ENCODE measurements at regions of chr3 and their contacts with region 1.

Region 1: GRCh38 chr3:64187065-64187959 is 38.0 kb downstream of the PRICKLE2 start:
- DNase-seq: no peak
- H3K4me3 ChIP-seq: no peak overlapping the region
- H3K27ac ChIP-seq: no peak overlapping the region
- H3K4me1 ChIP-seq: peaks cover 0 to 9% (median 1%) of the 10 kb centered on the region in 4 experiments; a peak in 2 of 7 replicates
- H3K27me3 ChIP-seq: no peaks in the 10 kb centered on the region; a peak in 1 of 7 replicates
- CTCF ChIP-seq: no peak
- EP300 ChIP-seq: no peak
- POLR2A ChIP-seq: no peak
- RAD21 ChIP-seq: no peak

Region 2: DNA sequence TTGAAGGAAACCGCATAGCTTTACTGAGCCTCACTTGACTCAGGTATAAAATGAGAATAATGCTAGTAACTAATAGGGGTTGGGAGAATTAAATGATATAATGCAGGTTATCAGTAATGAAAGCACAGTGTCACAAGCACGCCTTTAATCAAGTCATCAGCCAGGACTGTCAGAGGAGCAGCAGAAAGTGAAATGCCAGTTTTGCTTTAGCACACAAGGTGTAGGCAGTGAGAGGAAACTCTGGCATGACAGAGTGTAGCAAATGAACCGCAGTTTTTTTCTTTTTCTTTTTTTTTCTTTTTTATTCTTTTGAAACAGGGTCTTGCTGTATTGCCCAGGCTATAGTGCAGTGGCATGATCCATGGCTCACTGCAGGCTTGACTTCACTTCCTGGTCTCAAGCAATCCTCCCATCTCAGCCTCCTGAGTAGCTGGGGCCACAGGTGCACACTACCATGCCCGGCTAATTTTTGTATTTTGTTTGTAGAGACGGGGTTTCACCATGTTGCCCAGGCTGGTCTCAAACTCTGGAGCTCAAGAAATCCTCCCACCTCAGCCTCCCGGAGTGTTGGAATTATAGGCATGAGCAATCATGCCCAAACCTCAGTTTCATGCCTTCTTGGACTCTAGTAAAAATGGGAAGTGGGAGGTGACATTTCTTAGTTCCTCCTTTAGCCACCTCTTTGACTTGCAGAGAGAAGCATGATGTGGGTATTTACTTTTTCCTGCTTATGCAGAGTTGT is 265.4 kb before region 1 on chr3:
- CTCF ChIA-PET with region 1: no interaction called
- POLR2A ChIA-PET with region 1: no interaction called
- DNase-seq: no peak
- H3K4me3 ChIP-seq: no peak overlapping the region
- H3K27ac ChIP-seq: no peak overlapping the region
- H3K4me1 ChIP-seq: no peaks in the 10 kb centered on the region
- H3K27me3 ChIP-seq: no peaks in the 10 kb centered on the region
- CTCF ChIP-seq: no peak
- EP300 ChIP-seq: no peak
- POLR2A ChIP-seq: no peak
- RAD21 ChIP-seq: no peak

Region 3: DNA sequence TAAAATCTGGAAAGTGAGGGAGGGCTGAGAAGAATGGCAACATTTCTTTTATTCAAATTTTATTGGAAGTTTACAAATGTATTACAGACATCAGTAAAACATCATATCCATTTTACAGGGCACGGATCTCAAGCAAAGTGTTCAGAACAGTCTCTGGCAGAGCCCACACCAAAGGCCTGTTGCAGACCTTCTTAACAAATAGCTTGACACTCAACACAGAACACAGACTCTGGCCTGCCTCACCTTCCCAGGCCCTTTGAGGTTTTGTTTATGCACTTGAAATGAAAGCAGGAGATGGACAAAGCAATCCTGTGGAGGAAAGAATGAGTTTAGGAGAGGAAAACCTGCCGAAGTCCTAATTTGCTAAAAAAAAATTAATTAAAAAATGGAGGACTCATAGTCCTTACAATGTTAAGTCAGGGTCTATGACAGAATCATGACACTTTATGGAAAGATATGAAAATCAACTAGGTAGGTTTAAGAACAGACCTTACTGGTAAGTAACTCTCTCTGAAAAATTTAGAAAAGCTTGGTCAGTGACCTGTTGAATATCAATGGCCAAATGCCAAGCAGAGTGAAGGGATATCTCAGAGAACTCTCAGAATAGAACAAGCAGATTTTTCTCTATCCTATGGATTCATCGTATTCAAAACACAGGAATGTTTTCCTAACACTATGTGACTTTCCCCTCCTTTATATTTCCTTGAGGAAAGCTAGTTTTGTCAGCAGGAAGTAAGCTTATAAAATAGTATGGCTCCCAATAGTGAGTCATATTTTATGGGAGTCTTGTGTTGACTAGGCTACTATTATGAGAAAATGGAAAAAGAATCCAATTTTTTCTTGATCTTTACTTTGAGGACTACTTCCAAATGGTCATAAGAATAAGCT is 93.2 kb before region 1 on chr3:
- CTCF ChIA-PET with region 1: no interaction called
- POLR2A ChIA-PET with region 1: no interaction called
- DNase-seq: no peak
- H3K4me3 ChIP-seq: peak overlapping the region in 1 of 4 experiments; percentile 27; a peak in 1 of 8 replicates
- H3K27ac ChIP-seq: no peak overlapping the region
- H3K4me1 ChIP-seq: peaks cover 4 to 21% (median 14%) of the 10 kb centered on the region in 4 experiments
- H3K27me3 ChIP-seq: no peaks in the 10 kb centered on the region
- CTCF ChIP-seq: no peak
- EP300 ChIP-seq: no peak
- POLR2A ChIP-seq: no peak
- RAD21 ChIP-seq: no peak

Region 4: GRCh38 chr3:64163755-64164148 is 23.6 kb before region 1 on chr3:
- CTCF ChIA-PET with region 1: interaction called, 11 read pairs
- POLR2A ChIA-PET with region 1: no interaction called
- DNase-seq: no peak
- H3K4me3 ChIP-seq: no peak overlapping the region
- H3K27ac ChIP-seq: no peak overlapping the region
- H3K4me1 ChIP-seq: peaks cover 3 to 22% (median 15%) of the 10 kb centered on the region in 4 experiments; a peak in 5 of 7 replicates
- H3K27me3 ChIP-seq: no peaks in the 10 kb centered on the region
- CTCF ChIP-seq: no peak
- EP300 ChIP-seq: no peak
- POLR2A ChIP-seq: no peak
- RAD21 ChIP-seq: no peak